Right cardiac atrium (tissue), 5 donors: ENCODE measurements at regions of chrX and their contacts with region 1.

Region 1: DNA sequence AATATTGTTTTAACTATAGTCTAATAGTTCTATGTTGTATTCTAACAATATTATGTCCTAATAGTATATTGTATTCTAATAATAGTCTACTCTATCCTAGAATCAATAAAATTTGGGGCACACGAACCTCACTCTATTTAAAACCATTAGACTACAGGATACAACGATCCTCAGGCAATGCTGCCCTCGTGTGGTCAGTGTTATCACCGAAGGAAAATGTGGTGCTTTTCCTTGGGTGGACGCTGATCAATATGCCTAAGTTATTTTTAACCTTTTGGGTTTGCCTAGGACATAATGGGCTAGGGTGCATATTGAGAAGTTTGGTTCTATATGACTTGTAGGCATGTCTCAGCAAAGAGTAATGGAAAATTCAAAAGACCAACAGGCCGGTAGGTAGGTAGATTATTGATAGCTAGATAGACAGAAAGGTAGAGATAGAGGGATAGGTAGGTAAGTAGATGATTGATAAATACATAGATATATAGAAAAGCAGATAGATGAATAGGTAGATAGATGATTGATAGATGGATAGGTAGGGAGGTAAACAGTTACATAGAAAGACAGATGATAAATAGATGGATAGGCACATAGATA is 75.1 kb downstream of the PRKX start:
- DNase-seq: peak in 2 of 3 donors; percentile 25 to 58
- ATAC-seq: no peak
- H3K4me3 ChIP-seq: no peak overlapping the region
- H3K27ac ChIP-seq: no peak overlapping the region
- H3K4me1 ChIP-seq: no peaks in the 10 kb centered on the region
- H3K27me3 ChIP-seq: no peaks in the 10 kb centered on the region

Region 2: DNA sequence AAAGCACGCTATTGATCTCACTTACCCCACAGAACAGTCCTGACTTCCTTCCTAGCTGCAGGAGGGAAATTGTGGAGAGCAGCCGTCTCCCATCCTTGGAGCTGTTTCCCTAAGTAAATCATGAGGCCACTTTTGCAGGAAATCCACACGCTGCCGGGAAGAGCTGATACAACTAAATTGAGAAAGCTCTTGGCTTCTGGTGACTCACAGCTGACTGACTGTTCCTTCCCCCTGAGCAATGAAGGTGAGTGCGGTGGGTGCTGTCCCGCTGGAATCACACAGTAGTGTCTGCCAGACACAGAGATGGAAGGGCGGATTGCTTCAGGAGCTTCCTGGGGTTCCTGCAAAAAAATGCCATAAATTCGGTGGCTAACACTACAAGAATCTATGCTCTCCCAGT is 1754.6 kb before region 1 on chrX:
- intact Hi-C with region 1: no loop called
- DNase-seq: no peak
- ATAC-seq: no peak
- H3K4me3 ChIP-seq: no peak overlapping the region
- H3K27ac ChIP-seq: no peak overlapping the region
- H3K4me1 ChIP-seq: no peaks in the 10 kb centered on the region
- H3K27me3 ChIP-seq: no peaks in the 10 kb centered on the region

Region 3: GRCh38 chrX:3119376-3119775 is 519.0 kb before region 1 on chrX:
- intact Hi-C with region 1: loop called in 1 of 4 experiments (anchors 10 kb)
- DNase-seq: no peak
- ATAC-seq: no peak
- H3K4me3 ChIP-seq: no peak overlapping the region
- H3K27ac ChIP-seq: no peak overlapping the region
- H3K4me1 ChIP-seq: no peaks in the 10 kb centered on the region
- H3K27me3 ChIP-seq: no peaks in the 10 kb centered on the region

Region 4: GRCh38 chrX:4181756-4182407 is 543.5 kb after region 1 on chrX:
- intact Hi-C with region 1: no loop called
- DNase-seq: no peak
- ATAC-seq: no peak
- H3K4me3 ChIP-seq: no peak overlapping the region
- H3K27ac ChIP-seq: no peak overlapping the region
- H3K4me1 ChIP-seq: no peaks in the 10 kb centered on the region
- H3K27me3 ChIP-seq: no peaks in the 10 kb centered on the region